Astrocyte of the cerebellum (primary cell): ENCODE measurements at regions of chr7 and their contacts with region 1.

Region 1: GRCh38 chr7:22559829-22560489 is 60.0 kb upstream of the STEAP1B start:
- DNase-seq: peak; percentile 85
- H3K4me3 ChIP-seq: no peak overlapping the region
- CTCF ChIP-seq: peak; percentile 86

Region 2: DNA sequence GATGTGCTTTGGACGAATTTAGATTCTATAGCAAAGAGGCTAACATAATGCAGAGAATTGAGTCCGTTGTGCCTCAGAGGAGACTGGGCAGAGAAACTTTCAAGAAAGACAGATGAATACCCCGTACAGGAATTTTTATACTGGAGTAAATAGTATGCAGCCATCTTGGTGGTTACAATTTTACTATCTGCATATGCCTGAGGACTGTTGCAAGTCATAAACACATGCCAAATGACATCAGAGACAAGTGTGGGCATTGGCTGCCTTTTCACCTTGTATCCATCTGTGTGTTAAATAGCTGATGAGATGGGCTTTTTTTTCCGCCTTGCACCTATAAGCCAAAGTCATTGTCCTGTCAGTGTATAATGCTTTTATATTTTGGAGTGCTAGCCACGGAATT is 1399.6 kb before region 1 on chr7:
- in situ Hi-C with region 1: no loop called
- DNase-seq: no peak
- H3K4me3 ChIP-seq: no peak overlapping the region
- CTCF ChIP-seq: no peak

Region 3: DNA sequence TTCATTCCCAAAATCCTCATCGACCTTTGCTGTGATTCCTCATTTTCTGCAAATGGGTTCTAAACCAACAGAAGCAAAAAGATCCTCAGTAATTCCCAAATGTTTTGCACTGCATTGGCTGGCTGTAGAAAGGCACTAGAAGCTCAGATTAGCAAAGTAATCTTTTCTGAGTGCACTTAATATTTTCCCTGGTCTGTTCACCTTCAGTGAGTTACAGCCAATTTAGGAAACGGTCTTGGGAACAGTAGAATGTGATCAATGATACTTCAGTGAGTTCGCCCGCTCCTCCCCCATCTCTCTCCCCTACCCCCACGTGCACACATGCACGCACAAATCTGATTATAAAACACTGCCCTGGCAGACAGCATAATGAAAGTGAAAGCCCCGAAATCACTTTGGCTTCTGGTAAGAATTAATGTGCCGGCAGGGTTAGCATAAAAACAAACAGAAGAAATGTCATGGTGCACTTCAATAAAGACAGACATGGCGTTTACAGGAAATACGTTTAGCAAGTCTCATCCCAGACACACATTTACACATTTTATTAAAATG is 412.9 kb before region 1 on chr7:
- in situ Hi-C with region 1: no loop called
- DNase-seq: no peak
- H3K4me3 ChIP-seq: no peak overlapping the region
- CTCF ChIP-seq: no peak

Region 4: GRCh38 chr7:22589641-22590201 is 29.8 kb after region 1 on chr7:
- in situ Hi-C with region 1: no loop called
- DNase-seq: peak; percentile 88
- H3K4me3 ChIP-seq: no peak overlapping the region
- CTCF ChIP-seq: no peak

Region 5: GRCh38 chr7:22732556-22733126 is 172.7 kb after region 1 on chr7:
- in situ Hi-C with region 1: loop called (anchors 5 kb)
- DNase-seq: no peak
- H3K4me3 ChIP-seq: no peak overlapping the region
- CTCF ChIP-seq: peak; percentile 56

Region 6: DNA sequence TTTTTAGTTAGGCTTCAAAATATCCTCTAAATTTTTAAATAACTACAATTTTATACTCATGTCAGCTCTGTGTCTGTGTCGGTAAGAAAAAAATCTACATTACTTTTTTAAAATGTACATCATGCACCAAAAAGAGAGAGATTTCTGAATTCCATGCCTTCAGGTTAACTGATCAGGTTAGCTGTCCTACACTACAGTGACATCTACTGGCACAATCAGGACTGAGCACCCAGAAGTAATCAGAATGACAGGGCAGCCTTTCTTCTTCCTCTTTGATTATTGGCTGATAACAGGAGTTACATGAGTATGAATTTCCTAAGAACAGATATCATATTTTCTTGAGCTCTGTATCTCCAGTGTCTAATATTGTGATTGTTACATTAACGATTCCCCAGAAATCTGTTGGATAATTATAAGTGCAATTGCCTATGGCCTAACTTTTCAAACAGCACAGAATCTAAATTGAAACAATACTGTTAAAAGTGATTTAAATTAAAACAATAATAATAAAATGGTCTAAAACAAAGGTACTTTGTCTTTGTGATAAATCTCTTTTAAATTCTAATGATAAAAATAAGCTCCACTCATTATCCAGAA is 495.7 kb after region 1 on chr7:
- in situ Hi-C with region 1: loop called (anchors 5 kb)
- DNase-seq: peak; percentile 43
- H3K4me3 ChIP-seq: no peak overlapping the region
- CTCF ChIP-seq: peak; percentile 91